H1 (cell line): ENCODE measurements at regions of chr2 and their contacts with region 1.

Region 1: DNA sequence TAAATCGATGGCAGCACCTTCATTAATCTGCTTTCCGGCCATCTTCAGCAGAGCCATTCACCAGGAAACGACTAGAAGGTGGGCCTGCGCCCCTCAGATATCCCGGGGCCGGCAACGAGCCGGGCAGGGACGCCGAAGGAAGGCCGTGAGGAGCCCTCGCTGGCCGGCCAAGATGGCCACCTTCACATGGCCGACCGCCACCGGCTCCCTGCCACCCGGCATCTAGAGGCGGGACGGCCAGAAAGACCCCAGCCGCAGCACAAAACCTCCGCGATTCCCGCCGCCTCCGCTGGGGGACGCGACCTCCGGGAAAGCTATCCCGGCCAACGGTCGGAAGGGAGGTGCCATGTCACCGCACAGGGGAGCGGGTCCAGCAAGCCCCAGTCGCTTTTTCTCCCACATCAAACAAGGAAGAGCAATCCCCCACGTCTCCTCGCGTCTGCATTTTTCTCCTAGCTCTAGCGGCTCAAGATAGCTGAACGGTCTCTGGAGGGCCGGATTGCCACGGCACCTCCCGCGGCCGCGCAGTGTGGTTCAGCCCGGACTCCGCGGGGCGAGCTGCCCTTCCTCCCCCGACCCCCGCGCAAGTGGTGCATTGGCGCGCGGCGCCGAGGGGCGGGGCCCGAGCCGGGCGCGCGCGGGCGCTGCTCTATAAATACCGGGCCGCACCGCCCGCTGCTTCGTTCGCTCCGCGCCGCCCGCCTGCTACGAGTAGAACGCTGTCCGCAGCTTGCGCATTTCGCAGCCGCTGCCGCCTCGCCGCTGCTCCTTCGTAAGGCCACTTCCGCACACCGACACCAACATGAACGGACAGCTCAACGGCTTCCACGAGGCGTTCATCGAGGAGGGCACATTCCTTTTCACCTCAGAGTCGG is at the start of gene MAT2A:
- DNase-seq: peak; percentile 84 to 99
- H3K4me3 ChIP-seq: peak within 1 kb of the TSS; percentile 87 to 100 (median 98)
- H3K27ac ChIP-seq: peak within 1 kb of the TSS; percentile 100
- H3K4me1 ChIP-seq: peaks cover 2 to 7% (median 5%) of the 10 kb centered on the region in 4 experiments; a peak in 4 of 7 replicates
- H3K27me3 ChIP-seq: no peaks in the 10 kb centered on the region
- CTCF ChIP-seq: peak; percentile 70 to 87 (median 76)
- EP300 ChIP-seq: peak in 1 of 2 experiments; percentile 95; a peak in 2 of 3 replicates
- POLR2A ChIP-seq: peak; percentile 99
- RAD21 ChIP-seq: peak; percentile 47 to 63; a peak in 3 of 4 replicates
- total RNA-seq, gene MAT2A: 297 and 307 TPM in 2 replicates

Region 2: GRCh38 chr2:85042330-85042729 is 496.4 kb before region 1 on chr2:
- CTCF ChIA-PET with region 1: no interaction called
- POLR2A ChIA-PET with region 1: no interaction called
- DNase-seq: no peak
- H3K4me3 ChIP-seq: no peak overlapping the region
- H3K27ac ChIP-seq: no peak overlapping the region
- H3K4me1 ChIP-seq: no peaks in the 10 kb centered on the region
- H3K27me3 ChIP-seq: no peaks in the 10 kb centered on the region
- CTCF ChIP-seq: no peak
- EP300 ChIP-seq: no peak
- POLR2A ChIP-seq: 0 out of 3 replicates have a peak, but pooled peaks of 1 of the 2 experiments have one; percentile 22
- RAD21 ChIP-seq: no peak

Region 3: GRCh38 chr2:85264471-85264870 is 274.3 kb before region 1 on chr2:
- CTCF ChIA-PET with region 1: no interaction called
- POLR2A ChIA-PET with region 1: no interaction called
- DNase-seq: no peak
- H3K4me3 ChIP-seq: no peak overlapping the region
- H3K27ac ChIP-seq: no peak overlapping the region
- H3K4me1 ChIP-seq: peaks cover 15 to 32% (median 24%) of the 10 kb centered on the region in 4 experiments; a peak in 6 of 7 replicates
- H3K27me3 ChIP-seq: no peaks in the 10 kb centered on the region
- CTCF ChIP-seq: no peak
- EP300 ChIP-seq: no peak
- POLR2A ChIP-seq: no peak
- RAD21 ChIP-seq: no peak; a peak in 1 of 4 replicates

Region 4: DNA sequence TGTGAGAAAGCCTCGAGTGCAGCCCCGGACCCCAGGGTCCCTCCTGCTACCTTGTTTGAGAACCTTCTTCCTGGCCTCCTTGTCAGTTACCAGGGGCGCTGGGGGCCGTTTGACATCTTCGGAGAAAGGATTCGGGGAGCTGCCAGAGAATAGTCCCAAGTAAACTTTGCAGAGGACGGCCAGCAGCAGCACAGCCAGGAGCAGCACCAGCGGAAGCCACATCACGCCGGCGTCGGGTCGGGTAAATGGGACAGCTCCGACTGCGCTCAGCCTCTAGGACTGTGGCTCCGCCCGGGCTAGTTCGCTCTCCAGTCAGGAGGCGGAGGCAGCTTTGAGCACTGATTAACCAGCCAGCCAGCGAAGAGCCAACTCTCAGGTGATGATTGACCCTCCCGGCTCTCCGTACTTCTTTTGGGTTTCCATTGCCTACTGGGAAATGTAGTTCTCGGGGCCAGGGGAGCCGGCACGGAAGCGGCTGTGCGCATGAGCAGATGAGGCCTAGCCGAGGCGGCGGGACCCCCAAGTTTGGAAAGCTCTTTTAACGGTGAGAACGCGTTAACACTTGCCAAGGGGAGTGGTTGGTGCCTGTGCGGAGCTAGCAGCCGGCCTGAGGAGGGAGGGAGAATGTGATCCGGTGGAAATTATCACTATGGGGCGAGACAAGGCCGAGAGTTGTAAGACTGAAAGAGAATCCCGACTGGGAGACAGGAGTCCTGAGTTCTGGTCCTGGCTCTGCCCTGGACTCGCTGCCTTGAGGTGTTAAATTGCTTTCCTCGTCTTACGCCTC is 184.2 kb before region 1 on chr2 and contains the starts of genes ELMOD3 and RETSAT:
- CTCF ChIA-PET with region 1: interaction called, 3 read pairs
- POLR2A ChIA-PET with region 1: interaction called, 15 read pairs
- DNase-seq: peak; percentile 92 to 96
- H3K4me3 ChIP-seq: peak within 1 kb of the TSS; percentile 75 to 96 (median 90)
- H3K27ac ChIP-seq: no peak within 1 kb of the TSS
- H3K4me1 ChIP-seq: peaks cover 0 to 3% (median 1%) of the 10 kb centered on the region in 4 experiments; a peak in 2 of 7 replicates
- H3K27me3 ChIP-seq: no peaks in the 10 kb centered on the region
- CTCF ChIP-seq: no peak
- EP300 ChIP-seq: no peak
- POLR2A ChIP-seq: peak in 1 of 2 experiments; percentile 93; a peak in 2 of 3 replicates
- RAD21 ChIP-seq: no peak
- total RNA-seq, gene ELMOD3: 6.9 and 10.2 TPM in 2 replicates
- total RNA-seq, gene RETSAT: 13.6 and 15.8 TPM in 2 replicates

Region 5: DNA sequence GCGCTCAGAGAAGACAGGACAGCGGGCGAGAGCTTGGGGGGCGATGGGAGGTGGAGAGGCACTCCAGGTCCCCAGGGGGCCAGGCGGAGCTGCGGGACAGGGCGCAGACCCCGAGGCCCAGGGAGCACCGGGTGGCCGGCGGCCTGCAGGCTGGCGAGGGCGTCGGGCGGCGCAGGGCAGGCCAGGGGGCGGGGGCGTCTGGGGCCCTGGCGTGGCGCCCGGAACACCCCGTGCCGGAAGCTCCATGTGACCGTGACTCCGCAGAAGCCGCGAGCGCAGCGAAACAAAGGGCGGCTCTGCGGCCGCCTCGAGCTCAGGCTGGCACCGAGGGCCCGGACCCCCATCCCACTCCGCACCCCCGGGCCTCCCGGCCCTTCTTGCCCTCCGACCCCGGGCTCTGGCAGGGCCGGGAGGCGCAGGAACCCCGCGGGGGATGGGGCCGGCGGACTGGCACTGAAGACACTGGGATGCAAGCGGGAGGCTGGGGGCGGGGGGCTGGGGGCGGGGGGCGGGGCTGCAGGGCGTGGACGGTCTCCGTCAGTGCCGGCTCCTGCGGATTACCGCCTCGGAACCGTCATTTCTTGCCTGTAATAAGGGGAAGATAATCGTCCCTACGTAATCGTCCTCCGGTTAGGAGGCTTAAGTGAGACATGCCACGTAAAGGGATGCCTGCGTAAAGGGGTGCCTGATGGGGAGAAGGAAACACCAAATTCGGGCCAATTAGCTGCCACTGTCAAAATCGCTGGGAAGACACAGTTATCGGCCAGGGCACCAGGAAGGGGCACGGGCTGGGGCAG is 101.0 kb before region 1 on chr2:
- CTCF ChIA-PET with region 1: interaction called, 49 read pairs
- POLR2A ChIA-PET with region 1: interaction called, 1,889 read pairs
- DNase-seq: peak in 1 of 2 experiments; percentile 82
- H3K4me3 ChIP-seq: peak overlapping the region in 3 of 4 experiments; percentile 23 to 56 (median 35); a peak in 7 of 8 replicates
- H3K27ac ChIP-seq: peak overlapping the region; percentile 69; the same call in 1 of the 2 replicates
- H3K4me1 ChIP-seq: peaks cover 7 to 39% (median 32%) of the 10 kb centered on the region in 4 experiments
- H3K27me3 ChIP-seq: peaks cover 0 to 14% (median 5%) of the 10 kb centered on the region in 4 experiments; a peak in 4 of 7 replicates
- CTCF ChIP-seq: no peak
- EP300 ChIP-seq: peak in 1 of 2 experiments; percentile 39; a peak in 1 of 3 replicates
- POLR2A ChIP-seq: peak in 1 of 2 experiments; percentile 80; a peak in 2 of 3 replicates
- RAD21 ChIP-seq: no peak

Region 6: DNA sequence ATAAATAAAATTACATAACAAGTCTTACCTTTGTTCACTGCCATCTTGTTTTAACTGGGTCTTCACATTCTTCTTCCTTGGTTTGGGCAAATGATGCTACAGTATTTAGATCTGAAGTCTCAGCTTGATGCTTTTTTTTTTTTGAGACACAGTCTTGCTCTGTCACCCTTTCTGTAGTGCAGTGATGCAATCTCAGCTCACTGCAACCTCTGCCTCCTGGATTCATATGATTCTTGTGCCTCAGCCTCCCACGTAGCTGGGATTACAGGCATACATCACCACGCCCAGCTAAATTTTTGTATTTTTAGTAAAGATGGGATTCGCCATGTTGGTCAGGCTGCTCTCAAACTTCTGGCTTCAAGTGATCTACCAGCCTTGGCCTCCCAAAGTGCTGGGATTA is 52.9 kb before region 1 on chr2:
- CTCF ChIA-PET with region 1: no interaction called
- POLR2A ChIA-PET with region 1: interaction called, 15 read pairs
- DNase-seq: no peak
- H3K4me3 ChIP-seq: no peak overlapping the region
- H3K27ac ChIP-seq: no peak overlapping the region
- H3K4me1 ChIP-seq: no peaks in the 10 kb centered on the region
- H3K27me3 ChIP-seq: no peaks in the 10 kb centered on the region
- CTCF ChIP-seq: no peak
- EP300 ChIP-seq: no peak
- POLR2A ChIP-seq: no peak
- RAD21 ChIP-seq: no peak

Region 7: DNA sequence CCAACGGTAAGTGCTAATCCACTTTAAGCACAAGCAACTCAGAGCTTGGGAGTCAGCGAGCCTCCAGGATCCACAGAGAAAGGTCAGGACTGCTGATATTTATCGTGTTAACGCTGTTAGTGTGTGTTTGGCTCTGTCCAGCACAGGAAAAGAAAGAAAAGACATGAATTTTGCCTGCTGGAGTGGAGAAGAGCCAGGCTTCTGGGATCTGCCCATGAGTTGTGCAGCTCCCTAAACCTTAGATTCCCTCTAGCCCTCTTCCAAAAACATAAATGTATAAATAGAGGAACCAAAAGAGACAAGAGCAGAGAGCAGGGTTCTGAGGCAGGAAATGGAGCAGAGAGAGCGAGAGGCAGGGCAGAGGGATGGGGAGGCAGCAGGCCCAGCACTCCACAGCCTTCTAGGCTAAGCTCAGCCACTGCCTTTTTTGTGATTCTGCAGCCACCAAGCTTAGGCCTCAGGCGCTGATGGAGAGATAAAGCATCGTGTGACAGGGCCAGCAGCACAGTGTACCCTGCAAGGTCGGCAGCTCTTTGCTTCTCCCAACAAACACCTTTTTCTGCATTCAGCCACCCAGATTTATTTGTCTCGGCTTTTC is 14.3 kb before region 1 on chr2:
- CTCF ChIA-PET with region 1: interaction called, 22 read pairs
- POLR2A ChIA-PET with region 1: interaction called, 803 read pairs
- DNase-seq: no peak
- H3K4me3 ChIP-seq: no peak overlapping the region
- H3K27ac ChIP-seq: no peak overlapping the region
- H3K4me1 ChIP-seq: peaks cover 5 to 12% (median 6%) of the 10 kb centered on the region in 4 experiments; a peak in 5 of 7 replicates
- H3K27me3 ChIP-seq: no peaks in the 10 kb centered on the region; a peak in 1 of 7 replicates
- CTCF ChIP-seq: no peak
- EP300 ChIP-seq: no peak
- POLR2A ChIP-seq: no peak
- RAD21 ChIP-seq: no peak

Region 8: GRCh38 chr2:85577386-85578242 is 38.9 kb after region 1 on chr2 and contains the start of gene VAMP8:
- CTCF ChIA-PET with region 1: no interaction called
- POLR2A ChIA-PET with region 1: interaction called, 803 read pairs
- DNase-seq: peak; percentile 53 to 80
- H3K4me3 ChIP-seq: peak within 1 kb of the TSS; percentile 32 to 62 (median 41); a peak in 6 of 8 replicates
- H3K27ac ChIP-seq: no peak within 1 kb of the TSS
- H3K4me1 ChIP-seq: peaks cover 2 to 14% (median 7%) of the 10 kb centered on the region in 4 experiments
- H3K27me3 ChIP-seq: peaks cover 0 to 13% (median under 1%) of the 10 kb centered on the region in 4 experiments; a peak in 1 of 7 replicates
- CTCF ChIP-seq: no peak
- EP300 ChIP-seq: no peak
- POLR2A ChIP-seq: 0 out of 3 replicates have a peak, but pooled peaks of 1 of the 2 experiments have one; percentile 19
- RAD21 ChIP-seq: no peak
- total RNA-seq, gene VAMP8: 34.4 and 38.1 TPM in 2 replicates

Region 9: GRCh38 chr2:85694052-85695025 is 155.6 kb after region 1 on chr2 and contains the start of gene GNLY:
- CTCF ChIA-PET with region 1: no interaction called
- POLR2A ChIA-PET with region 1: no interaction called
- DNase-seq: no peak
- H3K4me3 ChIP-seq: no peak within 1 kb of the TSS
- H3K27ac ChIP-seq: no peak within 1 kb of the TSS
- H3K4me1 ChIP-seq: peaks cover 0 to 2% (median 0%) of the 10 kb centered on the region in 4 experiments; a peak in 1 of 7 replicates
- H3K27me3 ChIP-seq: no peaks in the 10 kb centered on the region
- CTCF ChIP-seq: no peak
- EP300 ChIP-seq: no peak
- POLR2A ChIP-seq: no peak
- RAD21 ChIP-seq: no peak
- total RNA-seq, gene GNLY: not detected in 2 replicates